ENCODE measurements at regions of chr5 and their contacts with region 1.

Region 1: DNA sequence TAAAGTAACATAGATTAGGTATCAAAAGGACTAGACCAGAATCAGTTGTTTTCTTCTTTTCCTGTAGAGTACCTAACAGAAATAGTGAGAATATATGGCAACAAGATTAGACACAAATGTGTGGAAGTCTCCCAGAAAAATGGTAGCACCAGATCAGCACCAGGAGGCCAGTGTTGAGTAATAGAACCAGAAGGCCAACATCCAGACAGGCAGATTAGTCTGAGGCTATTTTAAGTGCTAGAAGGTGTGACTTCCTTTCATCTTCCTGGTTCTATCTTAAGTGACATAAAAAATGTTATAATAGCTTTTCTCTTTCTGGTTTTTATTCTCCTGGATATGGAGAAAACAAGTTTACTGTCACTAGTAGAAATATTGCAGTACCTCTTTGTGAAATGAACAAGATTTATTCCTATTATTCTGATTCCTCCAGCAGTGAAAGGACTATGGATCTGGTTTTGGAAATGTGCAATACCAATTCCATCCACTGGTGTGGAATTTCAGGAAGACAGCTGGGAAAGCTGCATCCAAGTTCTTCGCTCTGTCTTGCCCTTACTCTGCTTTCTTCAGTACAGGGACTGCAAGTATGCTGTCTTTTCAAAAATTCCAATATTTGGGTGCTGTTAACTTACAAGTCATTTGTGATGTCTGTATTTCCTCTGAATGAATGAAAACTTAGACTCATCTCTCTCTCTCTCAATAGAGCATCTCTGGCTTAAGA is 39.1 kb downstream of the SHLD3 start:
- DNase-seq: no peak
- H3K4me3 ChIP-seq: no peak overlapping the region
- CTCF ChIP-seq: peak; percentile 31

Region 2: DNA sequence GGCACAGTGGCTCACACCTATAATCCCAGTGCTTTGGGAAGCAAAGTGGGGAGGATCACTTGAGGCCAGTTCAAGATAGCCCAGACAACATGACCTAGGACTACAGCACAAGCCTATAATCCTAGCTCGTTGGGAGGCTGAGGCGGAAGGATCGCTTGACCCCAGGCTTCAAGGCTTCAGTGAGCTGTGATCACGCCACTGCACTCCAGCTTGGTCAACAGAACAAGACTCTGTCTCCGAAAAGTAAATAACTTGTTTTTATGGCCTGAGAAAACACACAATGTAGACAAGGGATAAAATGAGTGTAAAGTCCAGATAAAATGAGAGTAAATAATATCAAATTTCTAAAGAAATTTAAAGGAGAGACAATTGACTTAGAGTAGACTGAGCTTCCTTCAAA is 12.8 kb before region 1 on chr5:
- CTCF ChIA-PET with region 1: interaction called, 17 read pairs
- POLR2A ChIA-PET with region 1: interaction called, 5 read pairs
- DNase-seq: no peak
- H3K4me3 ChIP-seq: no peak overlapping the region
- CTCF ChIP-seq: no peak

Region 3: DNA sequence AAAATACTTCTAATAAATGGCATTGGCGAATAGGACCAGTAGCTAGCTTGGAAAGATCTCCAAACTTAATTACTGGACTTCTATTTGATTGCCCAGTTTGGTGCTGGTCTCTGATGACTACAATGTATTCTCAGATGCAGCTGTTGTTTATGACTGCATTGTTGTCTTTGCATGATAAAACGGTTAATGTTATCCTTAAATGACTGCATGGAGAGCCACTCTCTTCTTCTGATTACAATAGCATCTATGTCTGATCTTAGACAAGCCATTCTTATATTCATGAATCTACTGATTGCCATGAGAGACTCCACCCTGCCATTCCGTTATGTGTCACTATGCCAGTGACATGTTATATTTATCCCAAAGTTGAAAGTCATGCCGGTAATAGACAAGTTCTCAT is 219.5 kb after region 1 on chr5:
- CTCF ChIA-PET with region 1: no interaction called
- POLR2A ChIA-PET with region 1: no interaction called
- DNase-seq: no peak
- H3K4me3 ChIP-seq: no peak overlapping the region
- CTCF ChIP-seq: no peak